T-cell (primary cell): ENCODE measurements at regions of chr10 and their contacts with region 1.

Region 1: DNA sequence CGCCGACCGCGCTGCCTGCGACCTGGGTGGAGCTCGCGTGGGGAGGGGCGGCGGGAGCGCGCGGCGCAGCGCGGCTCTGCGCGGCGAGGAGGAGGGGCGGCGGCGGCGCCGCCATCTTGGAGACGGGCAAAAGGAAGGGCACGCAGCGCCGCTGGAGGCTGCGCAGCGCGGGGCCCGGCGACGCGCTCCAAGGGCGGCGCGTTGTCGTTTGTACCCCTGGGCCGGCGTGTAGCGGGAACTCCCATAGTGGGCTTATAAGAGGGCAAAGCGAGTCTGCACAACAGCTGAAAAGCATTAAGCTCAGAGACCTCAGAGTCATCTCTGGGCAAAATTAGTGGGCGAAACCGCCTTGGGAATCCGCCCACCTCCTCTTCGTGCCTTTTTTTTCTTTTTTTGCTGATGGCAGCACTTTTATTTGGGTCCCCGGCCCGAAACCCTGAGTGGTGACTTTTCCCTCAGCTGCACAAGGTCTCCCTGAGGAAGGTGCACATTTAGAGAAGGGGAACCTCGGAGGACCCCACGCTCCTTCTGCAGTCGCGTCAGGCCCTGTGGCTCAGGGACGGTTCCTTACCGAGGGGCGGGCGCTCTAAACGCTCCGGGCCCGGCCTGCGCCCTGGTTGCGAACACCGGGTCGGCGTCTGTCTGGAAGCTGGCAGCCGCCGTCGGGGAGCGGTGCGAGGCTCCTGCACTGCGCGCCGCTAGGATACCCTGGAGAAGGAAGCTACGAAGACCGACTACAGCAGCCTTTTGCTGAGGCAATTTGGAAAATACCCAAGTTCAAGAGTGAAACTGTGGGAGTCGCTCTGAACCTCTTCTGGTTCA is 428 bp upstream of the MCMBP start:
- DNase-seq: peak; percentile 76 to 95 (median 86)
- ATAC-seq: peak; percentile 92 to 96 (median 92)
- H3K4me3 ChIP-seq: peak overlapping the region; percentile 87 to 90
- H3K4me3 Mint-ChIP-seq: peak overlapping the region; percentile 83 to 89 (median 86)
- H3K27ac ChIP-seq: peak overlapping the region; percentile 85
- H3K27ac Mint-ChIP-seq: peak overlapping the region; percentile 87 to 92
- H3K4me1 ChIP-seq: peaks cover 15 to 30% of the 10 kb centered on the region in 2 experiments
- H3K4me1 Mint-ChIP-seq: peaks cover 40 to 45% (median 44%) of the 10 kb centered on the region in 3 donors
- H3K27me3 ChIP-seq: no peaks in the 10 kb centered on the region
- H3K27me3 Mint-ChIP-seq: no peaks in the 10 kb centered on the region

Region 2: GRCh38 chr10:119769886-119770285 is 103.2 kb before region 1 on chr10:
- CTCF ChIA-PET with region 1: no interaction called
- POLR2A ChIA-PET with region 1: no interaction called
- DNase-seq: no peak
- ATAC-seq: no peak
- H3K4me3 ChIP-seq: no peak overlapping the region
- H3K4me3 Mint-ChIP-seq: no peak overlapping the region
- H3K27ac ChIP-seq: no peak overlapping the region
- H3K27ac Mint-ChIP-seq: no peak overlapping the region
- H3K4me1 ChIP-seq: no peaks in the 10 kb centered on the region
- H3K4me1 Mint-ChIP-seq: peaks cover 13 to 15% (median 13%) of the 10 kb centered on the region in 3 donors
- H3K27me3 ChIP-seq: no peaks in the 10 kb centered on the region
- H3K27me3 Mint-ChIP-seq: no peaks in the 10 kb centered on the region

Region 3: DNA sequence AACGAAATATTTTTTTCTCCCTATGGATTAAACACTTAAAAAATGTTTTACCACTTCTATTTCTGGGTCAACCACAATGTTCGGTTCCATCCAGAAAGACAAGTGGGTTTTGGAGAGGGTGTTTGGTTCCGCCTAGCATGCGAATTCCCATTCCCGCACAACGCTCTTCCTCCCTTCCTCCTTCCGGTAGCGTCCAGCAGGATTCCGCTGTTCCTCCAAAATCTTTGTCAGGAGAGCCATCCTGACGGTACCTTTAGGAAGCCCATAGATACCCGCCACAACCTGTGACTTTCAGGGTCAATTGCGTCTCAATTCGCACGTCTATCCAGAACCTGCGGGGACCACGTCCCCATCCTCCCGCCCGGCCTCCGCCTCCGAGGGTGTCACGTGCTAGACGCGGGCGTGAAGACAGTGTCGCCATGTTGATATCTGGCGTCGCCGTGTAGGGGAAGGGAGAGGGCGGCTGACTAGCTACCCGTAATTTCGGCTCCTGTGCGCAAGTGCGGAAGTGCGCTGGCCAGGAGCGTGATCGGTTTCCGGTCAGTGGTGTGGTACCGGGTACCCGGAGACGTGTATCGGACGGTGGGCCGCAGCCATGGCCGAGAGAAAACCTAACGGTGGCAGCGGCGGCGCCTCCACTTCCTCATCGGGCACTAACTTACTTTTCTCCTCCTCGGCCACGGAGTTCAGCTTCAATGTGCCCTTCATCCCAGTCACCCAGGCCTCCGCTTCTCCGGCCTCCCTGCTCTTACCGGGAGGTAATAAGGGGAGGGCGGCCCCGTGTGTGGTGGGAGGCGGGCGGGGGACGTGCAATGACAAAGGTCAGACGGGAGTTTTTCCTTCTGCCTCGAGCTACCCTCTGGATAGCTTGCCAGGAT is 19.4 kb after region 1 on chr10 and contains the start of gene SEC23IP:
- CTCF ChIA-PET with region 1: interaction called, 3 to 14 read pairs
- POLR2A ChIA-PET with region 1: interaction called, 5 to 7 read pairs
- DNase-seq: peak; percentile 77 to 92 (median 87)
- ATAC-seq: peak; percentile 97 to 99 (median 99)
- H3K4me3 ChIP-seq: peak within 1 kb of the TSS; percentile 74 to 98
- H3K4me3 Mint-ChIP-seq: peak within 1 kb of the TSS; percentile 86 to 95 (median 91)
- H3K27ac ChIP-seq: peak within 1 kb of the TSS; percentile 82
- H3K27ac Mint-ChIP-seq: peak within 1 kb of the TSS; percentile 92 to 97
- H3K4me1 ChIP-seq: peaks cover 8 to 26% of the 10 kb centered on the region in 2 experiments
- H3K4me1 Mint-ChIP-seq: peaks cover 46 to 50% (median 49%) of the 10 kb centered on the region in 3 donors
- H3K27me3 ChIP-seq: no peaks in the 10 kb centered on the region
- H3K27me3 Mint-ChIP-seq: no peaks in the 10 kb centered on the region
- total RNA-seq, gene SEC23IP: 33.8 to 67.1 (median 52.0) TPM